Left ventricle myocardium inferior (tissue), 1 donor: ENCODE measurements at regions of chr19 and their contacts with region 1.

Region 1: DNA sequence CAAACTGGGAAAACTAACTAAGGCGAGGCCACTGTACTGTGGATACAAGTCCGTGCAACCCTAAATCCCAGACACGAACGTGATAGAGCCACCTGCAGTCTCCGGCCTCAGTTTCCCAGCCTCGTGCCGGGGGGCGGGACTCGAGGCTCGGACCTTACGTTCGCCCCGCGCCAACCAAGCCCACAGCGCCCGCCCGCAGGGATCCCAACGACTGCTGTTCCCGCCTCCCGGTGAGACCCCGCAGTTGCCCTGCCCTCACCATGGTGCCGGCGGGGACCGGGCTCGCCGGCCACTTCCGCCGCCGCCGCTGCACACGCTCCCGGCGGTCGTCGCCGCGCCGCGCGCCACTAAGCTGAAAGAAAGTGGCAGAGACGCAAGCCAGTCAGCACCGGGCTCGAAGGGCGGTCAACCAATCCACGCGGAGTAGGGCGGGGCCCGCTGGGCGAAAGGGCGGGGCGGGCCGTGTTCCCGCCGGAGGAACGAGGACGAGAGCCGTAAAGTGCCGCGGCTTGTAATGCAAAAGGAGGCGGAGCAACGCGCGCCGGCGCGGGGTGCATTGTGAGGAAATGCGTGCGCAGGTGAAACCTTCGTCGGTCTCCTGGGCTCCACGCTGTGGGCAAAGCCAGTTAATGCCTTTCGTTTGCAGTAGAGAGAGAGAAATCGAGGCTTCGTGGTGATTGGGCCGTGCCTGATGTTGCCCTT is at the start of gene LSM4:
- DNase-seq: peak; percentile 98
- H3K4me3 ChIP-seq: peak within 1 kb of the TSS; percentile 83
- H3K27ac ChIP-seq: peak within 1 kb of the TSS; percentile 96
- H3K4me1 ChIP-seq: peaks cover 63% of the 10 kb centered on the region
- H3K27me3 ChIP-seq: no peaks in the 10 kb centered on the region
- CTCF ChIP-seq: no peak
- total RNA-seq, gene LSM4: 94.8 TPM

Region 2: GRCh38 chr19:18279516-18280273 is 43.2 kb before region 1 on chr19:
- intact Hi-C with region 1: loop called (anchors 2 kb)
- DNase-seq: peak; percentile 91
- H3K4me3 ChIP-seq: peak overlapping the region; percentile 100
- H3K27ac ChIP-seq: peak overlapping the region; percentile 97
- H3K4me1 ChIP-seq: peaks cover 71% of the 10 kb centered on the region
- H3K27me3 ChIP-seq: no peaks in the 10 kb centered on the region
- CTCF ChIP-seq: peak; percentile 90

Region 3: GRCh38 chr19:18521885-18522624 is 199.1 kb after region 1 on chr19 and contains the start of gene ELL:
- intact Hi-C with region 1: no loop called
- DNase-seq: peak; percentile 100
- H3K4me3 ChIP-seq: peak within 1 kb of the TSS; percentile 94
- H3K27ac ChIP-seq: peak within 1 kb of the TSS; percentile 94
- H3K4me1 ChIP-seq: peaks cover 43% of the 10 kb centered on the region
- H3K27me3 ChIP-seq: no peaks in the 10 kb centered on the region
- CTCF ChIP-seq: no peak
- total RNA-seq, gene ELL: 7.9 TPM